ENCODE measurements at regions of chr6 and their contacts with region 1.

Region 1: DNA sequence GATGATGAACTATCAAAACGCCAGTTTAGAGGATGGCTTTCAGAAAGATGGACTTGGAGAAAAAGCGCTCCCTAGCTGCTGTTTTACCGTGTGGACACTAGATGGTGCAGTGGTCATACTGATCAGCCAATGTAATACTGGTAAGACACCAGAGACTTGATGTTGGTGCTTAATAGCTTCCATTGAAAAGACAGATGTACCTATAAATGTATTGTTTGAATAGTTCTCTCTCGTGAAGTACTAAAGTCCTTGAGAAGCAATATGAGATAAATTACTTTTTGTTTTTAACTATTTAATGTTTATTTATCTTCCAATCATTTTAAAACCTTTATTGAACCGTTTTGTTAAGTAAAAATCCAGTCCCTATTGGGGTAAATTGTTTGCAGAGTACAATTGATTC is 63.9 kb upstream of the FUCA2 start:
- DNase-seq: peak in 8 of 9 donors; percentile 34 to 79 (median 67)
- ATAC-seq: peak; percentile 99
- H3K4me3 ChIP-seq: no peak overlapping the region
- H3K4me3 Mint-ChIP-seq: no peak overlapping the region
- H3K27ac ChIP-seq: no peak overlapping the region
- H3K27ac Mint-ChIP-seq: peak overlapping the region in 1 of 9 donors; percentile 15
- H3K4me1 ChIP-seq: no peaks in the 10 kb centered on the region
- H3K4me1 Mint-ChIP-seq: peaks cover 0 to 9% (median 0%) of the 10 kb centered on the region in 7 donors
- H3K27me3 ChIP-seq: no peaks in the 10 kb centered on the region
- H3K27me3 Mint-ChIP-seq: no peaks in the 10 kb centered on the region

Region 2: GRCh38 chr6:143529095-143529494 is 46.3 kb before region 1 on chr6:
- CTCF ChIA-PET with region 1: no interaction called
- POLR2A ChIA-PET with region 1: no interaction called
- intact Hi-C with region 1: loop called in 1 of 2 experiments (anchors 2 kb)
- DNase-seq: no peak
- ATAC-seq: peak; percentile 47
- H3K4me3 ChIP-seq: no peak overlapping the region
- H3K4me3 Mint-ChIP-seq: peak overlapping the region in 1 of 10 donors; percentile 16
- H3K27ac ChIP-seq: no peak overlapping the region
- H3K27ac Mint-ChIP-seq: peak overlapping the region; percentile 44 to 95 (median 92)
- H3K4me1 ChIP-seq: peaks cover 14 to 15% of the 10 kb centered on the region in 2 donors
- H3K4me1 Mint-ChIP-seq: peaks cover 13 to 19% (median 15%) of the 10 kb centered on the region in 7 donors
- H3K27me3 ChIP-seq: no peaks in the 10 kb centered on the region
- H3K27me3 Mint-ChIP-seq: no peaks in the 10 kb centered on the region

Region 3: DNA sequence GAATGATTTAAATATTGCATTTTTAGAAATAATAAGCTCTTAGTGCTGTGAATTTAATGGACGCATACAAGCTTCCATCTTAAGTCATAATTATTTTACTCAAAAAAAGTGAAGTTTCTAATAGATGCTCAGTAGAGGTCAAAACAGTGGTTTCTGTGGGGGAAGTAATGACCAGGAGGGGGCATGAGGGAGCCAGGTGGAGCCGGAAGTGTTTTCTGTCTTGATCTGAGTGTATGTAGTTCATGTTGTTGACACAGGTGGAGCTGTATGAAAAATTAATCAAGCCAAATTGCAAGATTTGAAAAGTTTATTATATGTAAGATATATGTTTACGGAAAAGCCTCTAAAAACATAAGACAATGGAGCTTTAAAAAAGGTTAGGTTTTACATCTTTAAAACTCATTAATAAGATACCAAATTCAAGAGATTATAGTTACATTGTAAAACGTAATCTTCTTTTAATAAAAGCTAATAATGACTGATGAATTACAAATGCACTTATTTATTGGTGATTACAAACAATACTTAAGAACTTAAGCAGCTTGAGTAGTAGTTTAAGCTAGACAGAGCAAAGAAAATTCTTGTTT is 364.7 kb after region 1 on chr6:
- CTCF ChIA-PET with region 1: interaction called, 8 read pairs
- POLR2A ChIA-PET with region 1: no interaction called
- intact Hi-C with region 1: loop called (anchors 1 kb)
- DNase-seq: peak in 7 of 9 donors; percentile 44 to 69 (median 54)
- ATAC-seq: peak; percentile 96
- H3K4me3 ChIP-seq: no peak overlapping the region
- H3K4me3 Mint-ChIP-seq: no peak overlapping the region
- H3K27ac ChIP-seq: no peak overlapping the region
- H3K27ac Mint-ChIP-seq: no peak overlapping the region
- H3K4me1 ChIP-seq: no peaks in the 10 kb centered on the region
- H3K4me1 Mint-ChIP-seq: peaks cover 0 to 16% (median 6%) of the 10 kb centered on the region in 7 donors
- H3K27me3 ChIP-seq: no peaks in the 10 kb centered on the region
- H3K27me3 Mint-ChIP-seq: peaks cover 0 to 7% (median 0%) of the 10 kb centered on the region in 5 donors

Region 4: GRCh38 chr6:143967706-143968376 is 392.4 kb after region 1 on chr6:
- CTCF ChIA-PET with region 1: no interaction called
- POLR2A ChIA-PET with region 1: no interaction called
- intact Hi-C with region 1: no loop called
- DNase-seq: no peak
- ATAC-seq: no peak
- H3K4me3 ChIP-seq: no peak overlapping the region
- H3K4me3 Mint-ChIP-seq: no peak overlapping the region
- H3K27ac ChIP-seq: no peak overlapping the region
- H3K27ac Mint-ChIP-seq: no peak overlapping the region
- H3K4me1 ChIP-seq: no peaks in the 10 kb centered on the region
- H3K4me1 Mint-ChIP-seq: peaks cover 0 to 3% (median 0%) of the 10 kb centered on the region in 7 donors
- H3K27me3 ChIP-seq: no peaks in the 10 kb centered on the region
- H3K27me3 Mint-ChIP-seq: peaks cover 0 to 13% (median 7%) of the 10 kb centered on the region in 5 donors

Region 5: DNA sequence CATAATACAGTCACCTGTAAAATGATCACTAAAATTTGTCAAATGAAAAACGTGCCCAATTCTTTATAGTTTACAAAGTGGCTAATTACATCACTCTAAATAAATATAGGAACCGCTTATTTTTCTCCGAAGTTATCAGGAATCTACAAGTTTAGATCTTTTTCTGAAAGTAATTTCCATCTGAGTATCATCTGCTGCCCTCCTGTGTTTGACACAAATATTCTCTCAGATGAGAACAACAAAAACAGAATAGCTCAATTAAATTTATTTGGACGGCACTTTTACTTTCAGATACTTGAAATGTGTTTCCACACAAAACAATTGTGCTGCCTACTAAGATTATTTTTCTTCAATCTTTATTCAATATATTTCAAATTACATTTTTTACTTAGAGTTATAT is 514.9 kb after region 1 on chr6:
- CTCF ChIA-PET with region 1: no interaction called
- POLR2A ChIA-PET with region 1: no interaction called
- intact Hi-C with region 1: loop called (anchors 1 kb)
- DNase-seq: no peak
- ATAC-seq: no peak
- H3K4me3 ChIP-seq: no peak overlapping the region
- H3K4me3 Mint-ChIP-seq: no peak overlapping the region
- H3K27ac ChIP-seq: no peak overlapping the region
- H3K27ac Mint-ChIP-seq: no peak overlapping the region
- H3K4me1 ChIP-seq: peaks cover 13 to 14% of the 10 kb centered on the region in 2 donors
- H3K4me1 Mint-ChIP-seq: peaks cover 15 to 27% (median 22%) of the 10 kb centered on the region in 7 donors
- H3K27me3 ChIP-seq: no peaks in the 10 kb centered on the region
- H3K27me3 Mint-ChIP-seq: peaks cover 0 to 1% (median 0%) of the 10 kb centered on the region in 5 donors

Region 6: GRCh38 chr6:144482142-144482541 is 906.7 kb after region 1 on chr6:
- CTCF ChIA-PET with region 1: interaction called, 6 read pairs
- POLR2A ChIA-PET with region 1: no interaction called
- intact Hi-C with region 1: loop called in 1 of 2 experiments (anchors 1 kb)
- DNase-seq: peak; percentile 27 to 67 (median 61)
- ATAC-seq: peak; percentile 77
- H3K4me3 ChIP-seq: no peak overlapping the region
- H3K4me3 Mint-ChIP-seq: no peak overlapping the region
- H3K27ac ChIP-seq: no peak overlapping the region
- H3K27ac Mint-ChIP-seq: peak overlapping the region in 6 of 9 donors; percentile 12 to 88 (median 38)
- H3K4me1 ChIP-seq: no peaks in the 10 kb centered on the region
- H3K4me1 Mint-ChIP-seq: peaks cover 0 to 20% (median 4%) of the 10 kb centered on the region in 7 donors
- H3K27me3 ChIP-seq: no peaks in the 10 kb centered on the region
- H3K27me3 Mint-ChIP-seq: no peaks in the 10 kb centered on the region

Region 7: DNA sequence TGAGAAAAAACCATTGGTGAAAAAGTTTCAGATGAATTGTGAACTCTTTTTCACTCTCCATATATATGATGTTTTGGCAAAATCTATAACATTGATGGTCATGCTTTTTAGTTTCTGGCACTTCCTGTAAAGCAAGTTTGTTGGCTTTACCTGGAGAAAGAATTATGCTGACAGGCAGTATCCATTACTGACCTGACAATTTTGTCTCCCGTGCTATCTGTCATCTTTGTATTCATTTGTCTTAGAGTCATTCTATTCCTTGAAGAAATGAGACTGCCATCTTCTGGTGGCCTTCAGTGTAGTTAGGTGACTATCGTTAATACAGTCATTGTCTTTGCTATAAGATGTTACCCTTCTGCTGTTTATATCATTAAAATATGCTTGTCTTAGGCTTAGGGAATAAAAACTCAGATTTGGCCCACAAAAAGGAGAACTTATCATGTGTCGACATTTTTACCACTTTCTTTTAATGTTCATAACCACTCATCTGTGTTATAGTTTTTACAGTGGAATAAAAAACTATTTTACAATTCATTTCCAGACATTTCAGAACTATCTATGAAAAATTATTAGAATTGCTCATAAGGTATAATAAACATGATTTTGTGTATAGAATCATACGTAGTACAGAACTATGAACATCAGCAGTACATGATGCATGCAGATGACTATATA is 1452.8 kb after region 1 on chr6:
- CTCF ChIA-PET with region 1: no interaction called
- POLR2A ChIA-PET with region 1: no interaction called
- intact Hi-C with region 1: loop called in 1 of 2 experiments (anchors 2 kb)
- DNase-seq: peak in 2 of 9 donors; percentile 2 to 5
- ATAC-seq: peak; percentile 41
- H3K4me3 ChIP-seq: no peak overlapping the region
- H3K4me3 Mint-ChIP-seq: no peak overlapping the region
- H3K27ac ChIP-seq: no peak overlapping the region
- H3K27ac Mint-ChIP-seq: no peak overlapping the region
- H3K4me1 ChIP-seq: no peaks in the 10 kb centered on the region
- H3K4me1 Mint-ChIP-seq: no peaks in the 10 kb centered on the region
- H3K27me3 ChIP-seq: no peaks in the 10 kb centered on the region
- H3K27me3 Mint-ChIP-seq: peaks cover 18 to 41% (median 30%) of the 10 kb centered on the region in 5 donors